Right ventricle myocardium inferior (tissue), 1 donor: ENCODE measurements at regions of chr20 and their contacts with region 1.

Region 1: DNA sequence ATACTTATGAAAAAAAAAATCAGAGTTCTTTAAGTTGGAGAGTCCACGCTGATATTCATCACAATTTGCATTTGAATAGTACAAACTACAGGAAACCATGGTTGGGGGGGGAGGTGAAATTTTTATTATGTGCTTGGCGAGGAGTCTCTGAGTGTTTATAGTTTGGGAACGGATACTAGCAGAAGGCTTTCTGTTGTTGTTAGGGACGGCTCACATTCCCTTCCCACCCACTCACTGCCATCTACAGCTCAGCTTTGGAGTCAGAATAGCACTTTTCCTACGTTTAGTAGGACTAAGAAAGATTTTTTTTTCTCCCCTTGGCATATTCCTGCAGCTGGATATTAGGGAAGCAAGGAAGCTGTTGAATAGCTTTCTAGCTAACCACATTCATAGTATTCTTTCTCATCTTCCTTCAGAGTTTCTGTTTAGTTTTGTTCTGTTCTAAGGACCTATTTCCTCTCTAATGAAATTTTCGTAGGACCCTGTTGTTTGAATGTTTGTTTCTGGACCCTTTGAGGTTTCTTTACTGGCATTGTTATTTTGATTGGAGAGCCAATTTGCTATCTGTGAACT is 235.1 kb upstream of the ZNF217 start:
- DNase-seq: no peak
- ATAC-seq: peak; percentile 65

Region 2: DNA sequence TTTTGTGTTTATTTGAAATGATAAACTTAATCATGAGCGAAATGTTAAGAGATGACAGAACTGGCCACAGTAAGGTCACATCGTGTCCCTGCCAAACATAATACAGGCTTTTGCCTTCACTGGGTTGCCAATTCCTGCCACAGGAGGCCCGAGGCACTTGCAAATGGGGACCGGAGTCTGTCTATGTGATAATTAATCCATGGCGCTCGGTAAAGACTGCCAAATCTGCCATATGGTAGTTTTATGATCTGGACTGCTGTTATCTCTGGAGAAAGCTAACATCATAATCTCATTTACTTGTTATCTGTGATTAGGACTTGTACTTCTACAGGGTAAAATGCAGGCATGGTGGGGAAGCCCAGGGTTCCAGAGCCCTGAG is 1027.2 kb before region 1 on chr20:
- intact Hi-C with region 1: no loop called
- DNase-seq: peak; percentile 71
- ATAC-seq: peak; percentile 89

Region 3: GRCh38 chr20:53594068-53595017 is 234.4 kb before region 1 on chr20:
- intact Hi-C with region 1: loop called (anchors 5 kb)
- DNase-seq: peak; percentile 99
- ATAC-seq: peak; percentile 94

Region 4: DNA sequence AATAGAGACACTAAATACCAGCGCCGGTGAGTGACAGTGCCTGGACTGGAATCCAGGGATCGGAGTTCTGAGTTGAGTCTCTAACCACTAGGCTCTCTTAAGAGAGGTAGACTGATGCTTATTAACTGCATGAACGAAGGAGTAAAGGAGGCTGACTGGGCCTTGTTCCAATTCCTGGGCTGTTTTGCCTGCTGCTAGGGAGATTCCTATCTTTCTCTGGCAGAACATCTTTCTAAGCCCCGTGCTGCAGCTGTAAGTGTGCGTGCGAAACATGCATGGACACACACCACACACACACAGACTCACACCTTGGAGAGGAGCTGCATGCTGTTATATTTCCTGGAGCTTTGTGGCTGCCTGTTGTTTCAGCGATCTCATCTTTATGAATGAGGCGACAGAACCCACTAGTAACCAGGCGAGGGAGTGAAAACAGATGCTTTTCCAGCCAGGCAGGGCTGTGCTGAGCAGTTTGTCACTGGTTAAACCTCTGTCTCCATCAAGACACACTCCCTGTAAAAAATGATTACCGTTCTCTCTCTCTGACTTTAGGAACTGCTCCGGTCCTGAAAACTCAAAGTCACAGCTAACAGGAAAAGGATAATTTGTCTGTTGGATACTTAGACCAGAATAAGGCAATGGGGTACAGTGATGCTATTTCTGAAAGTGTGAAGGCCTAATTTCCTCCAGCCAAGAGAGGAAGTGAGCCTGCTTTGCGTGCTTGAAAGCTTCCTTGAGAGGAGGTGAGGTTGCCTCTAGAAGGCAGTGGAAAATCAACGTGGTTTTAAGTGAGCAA is 77.7 kb before region 1 on chr20:
- intact Hi-C with region 1: no loop called
- DNase-seq: no peak
- ATAC-seq: peak; percentile 26

Region 5: GRCh38 chr20:53869466-53870258 is 40.9 kb after region 1 on chr20:
- intact Hi-C with region 1: loop called (anchors 5 kb)
- DNase-seq: no peak
- ATAC-seq: peak; percentile 90